SK-N-SH (cell line): ENCODE measurements at regions of chrX and their contacts with region 1.

Region 1: DNA sequence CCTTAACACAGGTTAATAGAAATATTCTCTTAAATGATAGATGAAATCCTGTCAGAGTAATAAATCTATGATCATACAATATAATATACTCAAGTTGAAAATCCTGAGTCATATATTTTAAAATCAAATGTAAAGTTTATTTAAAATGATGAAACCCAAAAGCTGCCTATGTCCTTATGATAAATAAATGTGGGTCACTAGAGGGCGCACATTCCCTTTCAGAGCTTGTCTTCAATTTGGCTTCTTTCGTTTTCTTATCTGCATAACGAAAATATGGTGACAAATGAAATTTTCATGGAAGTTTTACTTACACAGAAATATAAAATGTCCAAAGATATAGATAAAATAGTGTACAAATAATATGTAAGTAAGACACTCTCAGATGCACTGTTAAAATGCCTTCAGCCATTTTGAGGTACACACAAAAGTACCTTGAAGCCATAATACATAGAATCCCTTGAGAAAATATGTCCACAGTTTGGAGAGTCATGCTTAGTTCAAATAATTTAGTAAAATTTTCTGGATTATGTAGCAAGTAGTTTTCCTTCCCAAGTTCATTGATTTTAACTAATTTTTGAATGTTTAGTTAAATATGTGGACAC is 680.4 kb downstream of the DMD start:
- DNase-seq: no peak
- H3K4me3 ChIP-seq: peak overlapping the region; percentile 34 to 35; a peak in 3 of 4 replicates
- H3K27ac ChIP-seq: no peak overlapping the region; a peak in 1 of 4 replicates
- H3K4me1 ChIP-seq: no peaks in the 10 kb centered on the region; a peak in 1 of 4 replicates
- H3K27me3 ChIP-seq: no peaks in the 10 kb centered on the region
- CTCF ChIP-seq: peak; percentile 92
- EP300 ChIP-seq: no peak
- RAD21 ChIP-seq: peak; percentile 77

Region 2: DNA sequence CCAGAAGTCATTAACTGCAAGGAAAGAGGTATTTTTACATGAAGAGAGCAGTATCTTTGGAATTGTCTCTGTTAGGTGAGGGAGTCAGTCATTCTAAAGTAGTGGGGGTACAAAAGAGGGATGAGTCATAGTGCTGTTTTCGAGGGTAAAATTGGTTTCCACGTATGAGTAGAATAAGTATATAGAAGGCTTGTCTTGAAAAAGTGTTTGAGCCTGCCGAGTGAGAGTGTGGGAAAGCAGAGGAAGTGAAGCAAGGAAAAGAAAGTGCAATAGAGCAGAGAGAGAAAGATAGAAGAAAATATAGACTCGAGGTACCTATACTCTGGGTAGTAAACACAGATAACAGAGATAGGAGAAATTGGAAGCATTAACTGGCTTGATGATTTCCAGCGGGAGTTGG is 15.9 kb before region 1 on chrX:
- CTCF ChIA-PET with region 1: interaction called, 10 read pairs
- POLR2A ChIA-PET with region 1: no interaction called
- DNase-seq: no peak
- H3K4me3 ChIP-seq: no peak overlapping the region
- H3K27ac ChIP-seq: no peak overlapping the region; a peak in 1 of 4 replicates
- H3K4me1 ChIP-seq: no peaks in the 10 kb centered on the region
- H3K27me3 ChIP-seq: no peaks in the 10 kb centered on the region
- CTCF ChIP-seq: no peak
- EP300 ChIP-seq: no peak
- RAD21 ChIP-seq: no peak

Region 3: DNA sequence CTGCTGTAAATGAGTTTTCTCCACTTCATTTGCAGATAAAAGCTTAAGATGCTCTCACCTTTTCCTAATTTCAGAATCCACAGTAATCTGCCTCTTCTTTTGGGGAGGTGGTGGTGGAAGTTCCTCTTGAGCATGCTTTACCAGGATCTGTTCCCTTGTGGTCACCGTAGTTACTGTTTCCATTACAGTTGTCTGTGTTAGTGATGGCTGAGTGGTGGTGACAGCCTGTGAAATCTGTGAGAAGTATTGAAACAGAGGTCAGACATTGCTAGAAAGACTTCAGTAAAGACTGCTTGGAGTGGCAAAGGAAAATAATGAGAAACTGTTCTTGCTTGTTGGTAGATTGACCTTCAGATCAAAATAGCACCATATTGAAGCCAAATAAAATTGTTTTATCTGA is 14.2 kb after region 1 on chrX:
- CTCF ChIA-PET with region 1: interaction called, 18 read pairs
- POLR2A ChIA-PET with region 1: no interaction called
- DNase-seq: no peak
- H3K4me3 ChIP-seq: no peak overlapping the region
- H3K27ac ChIP-seq: no peak overlapping the region
- H3K4me1 ChIP-seq: no peaks in the 10 kb centered on the region
- H3K27me3 ChIP-seq: no peaks in the 10 kb centered on the region
- CTCF ChIP-seq: no peak
- EP300 ChIP-seq: no peak
- RAD21 ChIP-seq: no peak

Region 4: GRCh38 chrX:33336783-33337182 is 805.9 kb after region 1 on chrX:
- CTCF ChIA-PET with region 1: interaction called, 12 read pairs
- POLR2A ChIA-PET with region 1: no interaction called
- DNase-seq: no peak
- H3K4me3 ChIP-seq: no peak overlapping the region
- H3K27ac ChIP-seq: no peak overlapping the region; a peak in 1 of 4 replicates
- H3K4me1 ChIP-seq: no peaks in the 10 kb centered on the region
- H3K27me3 ChIP-seq: no peaks in the 10 kb centered on the region
- CTCF ChIP-seq: peak; percentile 59
- EP300 ChIP-seq: no peak
- RAD21 ChIP-seq: peak; percentile 61